ENCODE measurements at regions of chr3 and their contacts with region 1.

Region 1: DNA sequence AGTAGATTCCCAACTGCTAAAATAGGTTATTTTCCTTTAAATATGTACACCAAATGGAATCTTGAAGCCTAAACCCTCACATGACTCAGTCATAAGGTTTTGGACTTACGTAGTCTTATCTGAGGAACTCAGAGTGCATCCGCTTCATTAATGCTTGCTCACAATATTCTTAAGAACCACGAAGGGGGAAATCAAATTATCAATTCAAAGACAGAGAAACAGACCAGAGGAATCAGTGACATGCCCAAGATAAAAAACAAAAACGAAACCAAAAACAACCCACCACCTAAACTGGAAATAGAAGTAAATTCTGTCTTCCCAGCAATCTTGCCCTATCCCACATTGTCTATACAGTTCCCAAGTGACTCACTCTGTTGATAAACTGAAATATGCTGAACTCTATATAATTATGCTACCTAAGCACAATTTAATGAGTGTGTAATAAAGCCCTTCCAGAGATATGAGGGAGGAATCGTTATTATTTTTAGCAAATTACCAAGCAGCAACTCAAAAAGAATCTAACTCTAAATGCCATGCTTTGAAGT is 135.4 kb upstream of the CBLB start:
- DNase-seq: no peak
- ATAC-seq: no peak
- H3K4me3 ChIP-seq: no peak overlapping the region
- H3K27ac ChIP-seq: no peak overlapping the region
- H3K4me1 ChIP-seq: no peaks in the 10 kb centered on the region
- H3K27me3 ChIP-seq: no peaks in the 10 kb centered on the region
- CTCF ChIP-seq: no peak
- EP300 ChIP-seq: no peak
- POLR2A ChIP-seq: no peak
- RAD21 ChIP-seq: no peak

Region 2: GRCh38 chr3:105944721-105945120 is 59.5 kb before region 1 on chr3:
- CTCF ChIA-PET with region 1: no interaction called
- POLR2A ChIA-PET with region 1: no interaction called
- in situ Hi-C with region 1: no loop called
- intact Hi-C with region 1: loop called (anchors 10 kb)
- DNase-seq: peak; percentile 4
- ATAC-seq: no peak
- H3K4me3 ChIP-seq: no peak overlapping the region
- H3K27ac ChIP-seq: no peak overlapping the region
- H3K4me1 ChIP-seq: no peaks in the 10 kb centered on the region
- H3K27me3 ChIP-seq: no peaks in the 10 kb centered on the region
- CTCF ChIP-seq: no peak
- EP300 ChIP-seq: no peak
- POLR2A ChIP-seq: no peak
- RAD21 ChIP-seq: no peak

Measured in HepG2 (cell line).